Heart right ventricle (tissue), 16 donors: ENCODE measurements at regions of chr16 and their contacts with region 1.

Region 1: GRCh38 chr16:79764415-79765110 is 164.0 kb upstream of the MAF start:
- DNase-seq: no peak
- ATAC-seq: no peak
- H3K4me3 ChIP-seq: no peak overlapping the region
- H3K27ac ChIP-seq: no peak overlapping the region
- H3K4me1 ChIP-seq: peaks cover 0 to 26% (median 18%) of the 10 kb centered on the region in 9 donors
- H3K27me3 ChIP-seq: no peaks in the 10 kb centered on the region
- CTCF ChIP-seq: no peak

Region 2: GRCh38 chr16:79449900-79450299 is 314.7 kb before region 1 on chr16:
- intact Hi-C with region 1: no loop called
- DNase-seq: no peak
- ATAC-seq: peak in 1 of 8 donors; percentile 38
- H3K4me3 ChIP-seq: no peak overlapping the region
- H3K27ac ChIP-seq: peak overlapping the region in 1 of 10 donors; percentile 66
- H3K4me1 ChIP-seq: peaks cover 0 to 22% (median 0%) of the 10 kb centered on the region in 9 donors
- H3K27me3 ChIP-seq: peaks cover 0 to 8% (median 0%) of the 10 kb centered on the region in 7 donors
- CTCF ChIP-seq: no peak

Region 3: DNA sequence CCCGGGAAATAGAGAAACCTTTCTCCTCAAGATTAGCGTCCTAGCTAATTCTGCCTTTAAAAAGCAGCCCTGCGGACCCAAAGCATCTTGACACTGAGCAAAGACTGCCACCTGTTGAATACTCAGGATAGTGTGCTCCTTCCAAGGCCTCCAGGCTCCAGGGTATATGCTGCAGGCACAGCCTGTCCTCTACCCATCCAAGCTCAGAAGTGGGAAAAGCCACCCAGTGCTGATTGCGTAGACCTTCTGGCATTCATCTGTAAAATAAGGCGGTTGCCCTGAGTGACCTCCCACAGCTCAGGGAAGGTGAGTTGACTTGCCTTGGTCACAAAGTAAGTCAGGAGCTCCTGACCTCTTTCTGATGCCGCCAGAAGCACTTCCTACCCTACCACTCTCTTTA is 320.1 kb after region 1 on chr16:
- intact Hi-C with region 1: loop called in 2 of 10 experiments (anchors 5 kb)
- DNase-seq: peak; percentile 10 to 46
- ATAC-seq: peak; percentile 59 to 97 (median 90)
- H3K4me3 ChIP-seq: no peak overlapping the region
- H3K27ac ChIP-seq: no peak overlapping the region
- H3K4me1 ChIP-seq: peaks cover 0 to 4% (median 0%) of the 10 kb centered on the region in 9 donors
- H3K27me3 ChIP-seq: no peaks in the 10 kb centered on the region
- CTCF ChIP-seq: peak; percentile 37 to 74 (median 66)